RWPE1 (cell line): ENCODE measurements at regions of chr6 and their contacts with region 1.

Region 1: DNA sequence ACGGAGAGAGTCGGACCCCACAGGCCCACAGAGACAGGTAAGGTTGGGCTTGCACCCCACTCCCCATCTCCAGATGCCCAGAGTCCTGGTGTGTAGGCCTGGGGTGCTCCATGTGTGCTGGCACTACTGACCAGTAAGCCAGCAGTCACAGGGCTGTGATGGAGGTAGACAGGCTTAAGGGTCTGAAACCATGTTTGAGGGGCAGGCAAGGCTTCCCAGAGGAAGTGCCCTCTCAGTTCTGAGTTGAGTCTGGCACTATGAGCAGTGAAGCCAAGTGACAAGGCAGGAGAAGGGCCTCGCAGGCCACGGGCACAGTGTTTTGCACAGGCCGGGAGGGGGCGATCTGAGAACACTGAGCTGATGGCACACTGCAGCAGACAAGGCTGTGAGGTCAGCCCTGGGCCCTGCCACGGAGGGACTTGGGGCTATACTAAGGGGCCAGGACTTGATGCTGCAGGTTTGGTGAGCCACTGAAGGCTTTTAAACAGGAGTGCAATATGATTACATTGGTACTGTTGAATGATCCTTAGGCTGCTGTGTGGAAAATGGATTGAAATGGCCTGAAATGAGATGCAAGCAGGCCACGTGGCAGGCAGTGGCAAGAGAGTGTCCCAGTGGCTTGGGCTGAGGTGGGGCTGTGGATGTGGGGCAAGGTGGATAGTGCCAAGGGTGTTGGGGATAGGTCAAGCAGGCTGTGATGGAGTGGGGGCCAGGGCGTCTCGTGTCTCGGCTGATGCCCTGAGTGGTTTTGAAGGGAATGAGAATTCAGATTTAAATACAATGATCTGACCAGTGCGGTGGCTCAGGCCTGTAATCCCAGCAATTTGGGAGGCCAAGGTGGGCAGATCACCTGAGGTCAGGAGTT is 20.3 kb downstream of the TTBK1 start:
- DNase-seq: peak; percentile 80
- H3K27ac ChIP-seq: no peak overlapping the region
- CTCF ChIP-seq: peak; percentile 87

Region 2: GRCh38 chr6:43021270-43022047 is 242.1 kb before region 1 on chr6 and contains the start of gene RRP36:
- CTCF ChIA-PET with region 1: no interaction called
- POLR2A ChIA-PET with region 1: no interaction called
- DNase-seq: peak; percentile 84
- H3K27ac ChIP-seq: peak within 1 kb of the TSS; percentile 87
- CTCF ChIP-seq: no peak

Region 3: DNA sequence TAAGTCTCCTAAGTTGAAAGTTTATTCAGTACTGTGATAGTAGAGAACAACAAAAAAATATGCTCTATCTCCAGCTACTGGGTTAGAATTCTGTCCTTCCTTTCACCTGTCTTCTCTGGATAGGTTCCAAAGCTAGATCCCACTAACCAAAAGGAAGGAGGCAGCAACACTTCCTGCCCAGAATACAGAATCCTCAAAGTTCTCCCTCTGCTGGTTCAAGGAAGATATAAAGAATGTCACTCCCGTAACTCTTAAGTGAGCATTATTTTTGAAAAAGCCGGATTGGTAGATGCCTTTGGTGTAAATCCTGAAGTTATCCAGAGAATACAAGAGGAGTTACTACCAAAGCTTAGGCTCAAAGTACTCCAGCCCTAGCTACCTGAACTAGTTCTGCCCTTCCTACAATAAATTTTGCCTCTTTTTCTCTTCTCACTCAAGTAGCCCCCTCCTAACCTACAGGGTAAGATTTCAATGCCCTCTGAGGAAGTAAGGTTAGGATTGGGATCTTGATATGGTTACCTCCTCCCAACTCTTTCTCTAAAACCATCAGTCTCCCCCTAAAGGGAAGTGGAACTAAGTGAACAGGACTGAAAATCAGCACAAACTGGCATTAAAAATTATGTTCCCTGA is 71.0 kb after region 1 on chr6:
- CTCF ChIA-PET with region 1: interaction called, 18 read pairs
- POLR2A ChIA-PET with region 1: no interaction called
- DNase-seq: peak; percentile 58
- H3K27ac ChIP-seq: no peak overlapping the region
- CTCF ChIP-seq: peak; percentile 57